HCT116 (cell line): ENCODE measurements at regions of chr3 and their contacts with region 1.

Region 1: GRCh38 chr3:100796556-100796955 is 87.3 kb downstream of the TFG start:
- DNase-seq: peak; percentile 22
- ATAC-seq: peak; percentile 75
- H3K4me3 ChIP-seq: no peak overlapping the region
- H3K27ac ChIP-seq: no peak overlapping the region
- H3K4me1 ChIP-seq: peaks cover 0 to 6% of the 10 kb centered on the region in 2 experiments; a peak in 1 of 4 replicates
- H3K27me3 ChIP-seq: no peaks in the 10 kb centered on the region
- CTCF ChIP-seq: peak; percentile 26 to 50 (median 42); a peak in 4 of 6 replicates
- POLR2A ChIP-seq: no peak
- RAD21 ChIP-seq: peak; percentile 62

Region 2: DNA sequence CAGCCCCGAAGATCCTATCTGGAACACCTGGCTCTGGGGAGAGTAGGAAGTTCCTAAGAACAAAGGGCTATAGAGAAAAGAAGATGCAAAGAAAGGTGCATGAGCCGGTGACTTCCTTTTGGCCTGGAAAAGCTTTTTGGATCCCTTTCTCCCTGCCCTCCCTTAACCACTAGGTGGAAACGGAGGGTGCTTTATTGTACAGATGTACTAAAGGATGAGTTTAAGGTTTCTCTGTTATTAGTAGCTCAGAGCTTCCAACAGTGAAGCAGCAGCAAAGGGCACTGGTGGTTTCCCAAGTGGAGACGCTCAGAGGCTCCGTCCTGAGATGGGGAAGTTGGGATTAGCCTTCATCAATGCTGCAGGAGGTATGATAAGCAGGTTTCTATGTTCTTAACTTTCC is 193.1 kb before region 1 on chr3:
- CTCF ChIA-PET with region 1: interaction called, 17 read pairs
- POLR2A ChIA-PET with region 1: no interaction called
- RAD21 ChIA-PET with region 1: interaction called, 5 to 6 read pairs
- intact Hi-C with region 1: no loop called
- DNase-seq: peak; percentile 41
- ATAC-seq: peak; percentile 94
- H3K4me3 ChIP-seq: no peak overlapping the region
- H3K27ac ChIP-seq: no peak overlapping the region
- H3K4me1 ChIP-seq: peaks cover 3 to 19% of the 10 kb centered on the region in 2 experiments; a peak in 3 of 4 replicates
- H3K27me3 ChIP-seq: no peaks in the 10 kb centered on the region
- CTCF ChIP-seq: peak; percentile 53 to 71 (median 66); a peak in 5 of 6 replicates
- POLR2A ChIP-seq: no peak
- RAD21 ChIP-seq: peak; percentile 65

Region 3: GRCh38 chr3:100737334-100737733 is 59.2 kb before region 1 on chr3:
- CTCF ChIA-PET with region 1: interaction called, 3 read pairs
- POLR2A ChIA-PET with region 1: no interaction called
- RAD21 ChIA-PET with region 1: no interaction called
- intact Hi-C with region 1: loop called (anchors 1 kb)
- DNase-seq: no peak
- ATAC-seq: peak; percentile 63
- H3K4me3 ChIP-seq: no peak overlapping the region
- H3K27ac ChIP-seq: no peak overlapping the region
- H3K4me1 ChIP-seq: no peaks in the 10 kb centered on the region
- H3K27me3 ChIP-seq: no peaks in the 10 kb centered on the region
- CTCF ChIP-seq: peak; percentile 20 to 50 (median 41); a peak in 5 of 6 replicates
- POLR2A ChIP-seq: no peak
- RAD21 ChIP-seq: peak; percentile 22

Region 4: GRCh38 chr3:101744735-101745134 is 948.2 kb after region 1 on chr3:
- CTCF ChIA-PET with region 1: no interaction called
- POLR2A ChIA-PET with region 1: no interaction called
- RAD21 ChIA-PET with region 1: no interaction called
- intact Hi-C with region 1: no loop called
- DNase-seq: no peak
- ATAC-seq: no peak
- H3K4me3 ChIP-seq: no peak overlapping the region
- H3K27ac ChIP-seq: no peak overlapping the region
- H3K4me1 ChIP-seq: no peaks in the 10 kb centered on the region
- H3K27me3 ChIP-seq: no peaks in the 10 kb centered on the region
- CTCF ChIP-seq: no peak
- POLR2A ChIP-seq: no peak
- RAD21 ChIP-seq: no peak